ENCODE measurements at regions of chr4 and their contacts with region 1.

Region 1: GRCh38 chr4:128565565-128566186 is 243.8 kb upstream of the JADE1 start:
- DNase-seq: peak; percentile 46
- ATAC-seq: peak; percentile 98
- H3K4me3 ChIP-seq: no peak overlapping the region
- H3K27ac ChIP-seq: no peak overlapping the region
- H3K4me1 ChIP-seq: no peaks in the 10 kb centered on the region
- H3K27me3 ChIP-seq: no peaks in the 10 kb centered on the region
- CTCF ChIP-seq: peak; percentile 78 to 86 (median 79); a peak in 5 of 6 replicates
- POLR2A ChIP-seq: no peak
- RAD21 ChIP-seq: peak; percentile 90

Region 2: GRCh38 chr4:128191115-128191781 is 374.4 kb before region 1 on chr4:
- CTCF ChIA-PET with region 1: no interaction called
- POLR2A ChIA-PET with region 1: no interaction called
- RAD21 ChIA-PET with region 1: no interaction called
- intact Hi-C with region 1: loop called (anchors 10 kb)
- DNase-seq: peak; percentile 37
- ATAC-seq: peak; percentile 97
- H3K4me3 ChIP-seq: no peak overlapping the region
- H3K27ac ChIP-seq: no peak overlapping the region
- H3K4me1 ChIP-seq: no peaks in the 10 kb centered on the region
- H3K27me3 ChIP-seq: no peaks in the 10 kb centered on the region
- CTCF ChIP-seq: peak; percentile 69 to 94 (median 84)
- POLR2A ChIP-seq: no peak
- RAD21 ChIP-seq: peak; percentile 85

Region 3: DNA sequence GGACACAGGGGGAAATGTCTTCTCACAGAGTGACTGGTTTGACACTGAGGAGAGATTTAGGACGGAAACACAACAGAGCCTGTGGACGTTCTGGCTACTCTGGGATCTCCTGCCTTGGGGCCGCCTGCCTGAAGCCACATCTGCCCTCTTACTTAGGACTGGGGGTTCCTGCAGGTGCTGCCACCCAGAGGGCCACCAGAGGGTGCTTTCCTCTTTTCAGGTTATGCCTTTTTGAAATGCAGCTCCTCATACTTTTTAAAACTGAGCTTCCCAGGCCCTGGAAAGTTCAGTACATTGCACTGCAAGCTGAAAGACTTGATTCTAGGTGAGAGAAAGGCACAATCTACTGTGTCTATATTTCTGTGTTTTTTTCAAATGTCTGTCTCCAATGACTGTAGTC is 185.8 kb before region 1 on chr4:
- CTCF ChIA-PET with region 1: no interaction called
- POLR2A ChIA-PET with region 1: no interaction called
- RAD21 ChIA-PET with region 1: no interaction called
- intact Hi-C with region 1: loop called (anchors 10 kb)
- DNase-seq: no peak
- ATAC-seq: peak; percentile 97
- H3K4me3 ChIP-seq: no peak overlapping the region
- H3K27ac ChIP-seq: no peak overlapping the region
- H3K4me1 ChIP-seq: no peaks in the 10 kb centered on the region
- H3K27me3 ChIP-seq: peaks cover 28% of the 10 kb centered on the region; the same call in 1 of the 2 replicates
- CTCF ChIP-seq: peak; percentile 50 to 80 (median 80); a peak in 5 of 6 replicates
- POLR2A ChIP-seq: no peak
- RAD21 ChIP-seq: peak; percentile 61

Region 4: GRCh38 chr4:128553686-128554515 is 11.8 kb before region 1 on chr4:
- CTCF ChIA-PET with region 1: interaction called, 3 read pairs
- POLR2A ChIA-PET with region 1: interaction called, 14 read pairs
- RAD21 ChIA-PET with region 1: no interaction called
- intact Hi-C with region 1: no loop called
- DNase-seq: no peak
- ATAC-seq: no peak
- H3K4me3 ChIP-seq: peak overlapping the region; percentile 45 to 62
- H3K27ac ChIP-seq: no peak overlapping the region
- H3K4me1 ChIP-seq: peaks cover 6 to 17% of the 10 kb centered on the region in 2 experiments; a peak in 3 of 4 replicates
- H3K27me3 ChIP-seq: peaks cover 5% of the 10 kb centered on the region; the same call in 1 of the 2 replicates
- CTCF ChIP-seq: no peak
- POLR2A ChIP-seq: no peak
- RAD21 ChIP-seq: no peak

Region 5: GRCh38 chr4:128635141-128635954 is 69.7 kb after region 1 on chr4:
- CTCF ChIA-PET with region 1: no interaction called
- POLR2A ChIA-PET with region 1: no interaction called
- RAD21 ChIA-PET with region 1: no interaction called
- intact Hi-C with region 1: no loop called
- DNase-seq: no peak
- ATAC-seq: no peak
- H3K4me3 ChIP-seq: no peak overlapping the region
- H3K27ac ChIP-seq: no peak overlapping the region
- H3K4me1 ChIP-seq: no peaks in the 10 kb centered on the region
- H3K27me3 ChIP-seq: no peaks in the 10 kb centered on the region
- CTCF ChIP-seq: no peak
- POLR2A ChIP-seq: no peak
- RAD21 ChIP-seq: no peak

Region 6: GRCh38 chr4:128809477-128810330 is 244.0 kb after region 1 on chr4 and contains the start of gene JADE1:
- CTCF ChIA-PET with region 1: no interaction called
- POLR2A ChIA-PET with region 1: no interaction called
- RAD21 ChIA-PET with region 1: no interaction called
- intact Hi-C with region 1: loop called (anchors 1 kb)
- DNase-seq: peak; percentile 90
- ATAC-seq: peak; percentile 67
- H3K4me3 ChIP-seq: peak within 1 kb of the TSS; percentile 84 to 92
- H3K27ac ChIP-seq: peak within 1 kb of the TSS; percentile 91
- H3K4me1 ChIP-seq: peaks cover 10 to 27% of the 10 kb centered on the region in 2 experiments; a peak in 3 of 4 replicates
- H3K27me3 ChIP-seq: no peaks in the 10 kb centered on the region
- CTCF ChIP-seq: peak; percentile 49 to 89 (median 57)
- POLR2A ChIP-seq: peak; percentile 56
- RAD21 ChIP-seq: peak; percentile 81
- total RNA-seq, gene JADE1: 26.5 TPM

Measured in HCT116 (cell line).